Astrocyte of the cerebellum (primary cell): ENCODE measurements at regions of chr4 and their contacts with region 1.

Region 1: GRCh38 chr4:3791978-3792542 is 25.9 kb downstream of the ADRA2C start:
- DNase-seq: no peak
- H3K4me3 ChIP-seq: no peak overlapping the region
- CTCF ChIP-seq: no peak

Region 2: DNA sequence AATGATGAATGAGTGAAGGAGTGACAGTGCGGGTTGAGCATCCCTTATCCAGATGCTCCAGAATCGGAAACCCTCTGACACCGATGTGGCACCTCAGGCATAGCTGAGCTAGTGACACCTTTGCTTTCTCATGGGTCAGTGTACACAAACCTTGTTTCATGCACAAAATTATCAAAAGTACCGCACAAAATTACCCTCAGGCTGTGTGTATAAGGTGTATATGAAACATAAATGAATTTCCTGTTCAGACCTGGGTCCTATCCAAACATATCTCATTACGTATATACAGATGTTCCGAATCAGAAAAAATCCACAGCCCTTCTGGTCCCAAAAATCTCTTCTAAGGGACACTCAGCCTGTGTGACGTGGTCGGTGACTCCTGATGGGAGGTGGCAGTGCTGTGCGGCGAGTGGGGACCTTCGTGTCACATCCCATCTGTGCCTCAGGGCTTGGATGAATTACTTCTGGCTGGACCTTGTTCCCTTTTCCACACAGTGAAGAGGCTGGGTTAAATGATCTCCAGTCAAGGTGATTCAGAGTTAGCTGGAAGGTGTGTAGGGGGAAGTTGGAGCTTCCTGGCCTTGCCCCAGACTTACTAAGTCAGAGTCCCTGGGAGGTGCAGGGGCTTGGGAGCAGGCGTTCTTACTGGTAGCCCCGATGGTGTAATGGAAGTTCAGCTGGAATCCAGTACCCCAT is 480.4 kb before region 1 on chr4:
- in situ Hi-C with region 1: no loop called
- DNase-seq: no peak
- H3K4me3 ChIP-seq: no peak overlapping the region
- CTCF ChIP-seq: no peak

Region 3: DNA sequence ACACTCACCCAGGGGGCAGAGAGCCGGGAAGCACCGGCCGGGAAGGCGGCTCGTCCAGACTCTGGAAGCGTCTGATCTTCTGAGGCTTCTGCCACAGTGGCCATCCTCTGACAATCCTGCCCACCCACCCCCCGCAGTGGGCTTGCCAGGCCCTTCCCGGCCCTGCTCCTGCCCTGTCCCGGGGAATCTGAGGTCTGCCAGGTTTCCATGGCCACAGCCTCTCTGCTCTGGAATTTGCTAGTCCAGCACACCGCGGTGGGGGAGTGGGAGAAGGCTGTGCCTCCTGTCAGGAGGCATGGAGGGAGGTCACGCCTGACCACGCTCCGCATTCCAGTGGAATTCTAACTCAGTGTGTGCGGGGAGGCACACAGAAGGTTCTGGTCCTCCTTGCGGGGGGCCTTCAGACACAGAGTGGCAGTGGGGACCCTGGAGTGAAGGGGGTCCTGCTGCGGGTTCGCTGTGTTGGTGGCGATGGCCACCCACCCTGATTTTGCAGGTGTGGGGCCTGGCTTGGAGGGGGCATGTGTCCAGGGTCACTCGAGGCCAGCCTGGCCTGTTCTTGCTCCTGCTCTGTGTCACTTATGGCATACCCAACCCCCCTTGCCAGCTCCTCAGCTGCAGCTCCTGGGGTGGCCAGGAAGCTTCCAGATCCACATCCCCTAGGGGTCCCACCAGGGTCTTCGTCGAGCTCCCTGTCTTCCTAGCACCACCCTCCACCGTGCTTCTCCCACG is 81.4 kb before region 1 on chr4:
- in situ Hi-C with region 1: no loop called
- DNase-seq: no peak
- H3K4me3 ChIP-seq: no peak overlapping the region
- CTCF ChIP-seq: no peak

Region 4: DNA sequence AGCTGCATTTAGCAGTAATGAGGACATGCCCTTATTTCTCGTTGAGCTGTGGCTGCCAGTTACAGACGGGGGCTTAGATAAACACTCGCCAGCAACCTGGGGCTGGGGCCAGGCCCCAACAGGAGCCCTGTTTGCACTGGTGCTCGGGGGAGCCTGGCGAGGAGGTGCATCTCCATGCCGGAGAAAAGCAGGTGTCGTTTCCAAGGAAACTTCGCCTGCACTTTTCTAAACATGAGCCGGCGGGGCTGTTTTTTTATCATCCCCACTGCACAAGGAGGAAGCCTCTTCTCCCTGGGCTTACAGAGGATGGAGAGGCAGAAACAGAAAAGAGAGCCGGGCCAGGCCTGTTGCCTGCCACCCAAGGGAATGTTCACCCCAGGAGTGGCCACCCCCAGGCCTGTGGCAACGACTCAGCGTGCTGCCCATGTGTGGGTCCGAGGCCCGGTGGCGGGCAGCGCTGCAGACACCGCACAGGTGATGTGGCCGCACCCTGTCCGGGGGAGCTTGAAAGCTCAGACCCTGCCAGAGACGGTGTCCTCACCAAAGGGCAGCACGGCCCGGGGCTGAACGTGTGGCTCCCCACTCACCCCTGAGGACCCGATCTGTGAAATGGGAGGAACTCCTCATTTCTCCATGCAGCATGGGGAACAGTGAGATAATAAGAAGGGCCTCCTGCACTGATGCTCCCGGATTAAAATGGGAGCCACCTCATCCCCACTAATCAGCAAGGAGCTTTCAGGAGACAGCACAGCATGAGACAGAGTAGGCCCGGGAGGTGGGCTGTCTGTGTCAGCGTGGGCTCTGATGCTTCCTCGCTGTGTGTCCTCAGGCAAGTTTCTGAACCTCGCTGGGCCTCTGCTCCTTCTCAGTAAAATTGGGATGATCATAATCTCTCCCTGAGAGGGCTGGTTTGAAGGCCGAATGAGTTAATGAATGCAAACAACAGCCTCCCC is 59.7 kb before region 1 on chr4:
- in situ Hi-C with region 1: loop called (anchors 10 kb)
- DNase-seq: no peak
- H3K4me3 ChIP-seq: no peak overlapping the region
- CTCF ChIP-seq: no peak